Mammary epithelial cell (primary cell): ENCODE measurements at regions of chr9 and their contacts with region 1.

Region 1: DNA sequence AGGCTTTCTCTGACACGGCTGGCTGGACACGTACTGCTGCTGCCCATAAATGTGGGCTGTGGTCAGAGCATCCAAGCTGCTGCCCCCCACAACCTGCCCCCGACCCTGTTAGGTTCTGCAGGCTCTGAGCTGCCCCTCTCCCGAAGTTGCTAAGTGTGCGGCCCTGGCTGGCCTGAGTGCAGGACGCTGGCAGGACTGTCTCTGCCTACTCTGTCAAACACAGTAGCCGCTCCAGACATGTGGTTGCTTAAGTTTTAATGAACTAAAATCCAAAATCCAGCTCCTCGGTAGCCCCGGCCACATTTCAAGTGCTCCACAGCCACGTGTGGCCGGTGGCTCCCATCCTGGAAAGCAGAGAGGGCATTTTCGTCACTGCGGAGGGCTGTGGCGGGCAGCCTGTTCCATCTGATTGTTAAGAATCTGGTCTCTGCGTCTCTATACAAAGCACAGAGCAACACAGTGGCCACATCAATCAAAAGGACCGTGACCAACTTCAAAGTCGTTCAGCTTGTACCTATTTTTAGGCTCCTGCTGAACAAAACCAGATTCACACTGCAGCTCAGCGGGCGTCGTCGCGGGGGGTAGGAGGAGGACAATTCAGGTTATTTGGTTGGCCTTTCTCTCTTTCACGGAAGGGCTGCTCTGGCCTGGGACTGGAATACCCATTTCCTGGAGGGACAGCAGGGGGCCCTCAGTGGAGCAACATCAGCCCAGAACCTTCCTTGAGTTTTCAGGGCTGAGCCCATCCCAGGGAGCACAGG is 68.9 kb downstream of the PTCH1 start:
- DNase-seq: no peak
- H3K4me3 ChIP-seq: no peak overlapping the region
- H3K27ac ChIP-seq: no peak overlapping the region
- H3K4me1 ChIP-seq: no peaks in the 10 kb centered on the region
- H3K27me3 ChIP-seq: no peaks in the 10 kb centered on the region
- CTCF ChIP-seq: no peak

Region 2: GRCh38 chr9:95494416-95495371 is 46.9 kb after region 1 on chr9:
- CTCF ChIA-PET with region 1: no interaction called
- dilution Hi-C with region 1: loop called (anchors 5 kb)
- in situ Hi-C with region 1: no loop called
- intact Hi-C with region 1: no loop called
- DNase-seq: no peak
- H3K4me3 ChIP-seq: no peak overlapping the region
- H3K27ac ChIP-seq: no peak overlapping the region
- H3K4me1 ChIP-seq: peaks cover 9% of the 10 kb centered on the region
- H3K27me3 ChIP-seq: no peaks in the 10 kb centered on the region
- CTCF ChIP-seq: no peak